Posterior vena cava (tissue), 2 donors: ENCODE measurements at regions of chr2 and their contacts with region 1.

Region 1: GRCh38 chr2:177419274-177419673 is 26.7 kb downstream of the AGPS start:
- DNase-seq: no peak

Region 2: DNA sequence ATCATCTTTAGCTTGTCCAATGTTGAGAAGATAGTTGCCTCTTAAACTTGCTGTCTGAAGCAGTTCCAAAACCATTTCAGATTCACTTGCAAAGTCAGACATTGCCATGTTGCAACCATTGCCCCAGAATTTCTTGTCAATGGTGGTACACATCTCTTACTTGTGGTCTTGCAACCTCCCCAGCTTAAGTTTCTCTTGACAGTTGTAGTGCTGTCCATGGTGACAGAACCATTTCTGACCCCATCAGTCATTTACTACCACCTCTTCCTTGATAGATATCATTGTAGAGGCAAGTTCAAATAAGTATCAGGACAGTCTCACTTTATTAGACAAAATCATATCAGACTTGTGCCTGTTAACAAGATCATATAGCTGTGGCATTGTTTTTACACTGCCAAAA is 613.9 kb before region 1 on chr2:
- intact Hi-C with region 1: loop called in 1 of 2 experiments (anchors 5 kb)
- DNase-seq: no peak

Region 3: GRCh38 chr2:177332041-177332991 is 87.0 kb before region 1 on chr2:
- intact Hi-C with region 1: loop called in 1 of 2 experiments (anchors 10 kb)
- DNase-seq: no peak

Region 4: GRCh38 chr2:177397481-177398289 is 21.6 kb before region 1 on chr2:
- intact Hi-C with region 1: no loop called
- DNase-seq: no peak

Region 5: GRCh38 chr2:177464549-177464948 is 45.3 kb after region 1 on chr2:
- intact Hi-C with region 1: no loop called
- DNase-seq: no peak